Gastrocnemius medialis (tissue), 4 donors: ENCODE measurements at regions of chr1 and their contacts with region 1.

Region 1: DNA sequence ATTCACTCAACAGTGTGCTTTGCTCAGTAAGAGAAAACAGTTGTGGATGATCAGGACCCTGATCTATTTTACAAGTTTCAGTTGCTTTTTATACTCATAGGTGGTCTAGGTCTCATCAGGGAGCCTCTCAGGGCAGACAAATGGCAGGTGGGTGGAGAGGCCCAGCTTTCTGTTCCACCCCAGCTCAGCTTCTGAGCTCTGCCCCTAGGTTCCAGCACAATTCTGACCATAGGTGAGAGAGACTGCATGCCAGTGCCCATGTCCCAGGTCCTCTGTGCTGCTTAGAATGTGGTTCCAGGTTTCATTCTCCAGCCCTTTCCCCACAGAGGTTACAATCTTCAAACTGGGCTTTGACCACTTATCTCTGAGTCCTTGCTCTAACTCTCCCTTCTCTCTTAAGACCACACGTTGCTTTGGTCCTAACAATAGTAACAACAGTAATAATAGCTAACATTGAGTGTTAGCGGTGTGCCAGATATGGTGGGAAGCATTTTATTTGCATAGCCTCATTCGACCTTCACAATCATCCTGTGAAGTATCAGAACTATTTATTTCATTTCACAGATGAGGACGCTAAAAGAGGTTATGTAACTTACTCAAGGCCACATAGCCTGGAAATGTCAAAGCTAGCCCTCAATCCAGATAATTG is 19.6 kb upstream of the DUSP10 start:
- DNase-seq: no peak
- ATAC-seq: no peak
- H3K4me3 ChIP-seq: no peak overlapping the region
- H3K27ac ChIP-seq: no peak overlapping the region
- H3K4me1 ChIP-seq: peaks cover 4 to 11% of the 10 kb centered on the region in 2 donors
- H3K27me3 ChIP-seq: no peaks in the 10 kb centered on the region
- CTCF ChIP-seq: no peak
- POLR2A ChIP-seq: no peak

Region 2: DNA sequence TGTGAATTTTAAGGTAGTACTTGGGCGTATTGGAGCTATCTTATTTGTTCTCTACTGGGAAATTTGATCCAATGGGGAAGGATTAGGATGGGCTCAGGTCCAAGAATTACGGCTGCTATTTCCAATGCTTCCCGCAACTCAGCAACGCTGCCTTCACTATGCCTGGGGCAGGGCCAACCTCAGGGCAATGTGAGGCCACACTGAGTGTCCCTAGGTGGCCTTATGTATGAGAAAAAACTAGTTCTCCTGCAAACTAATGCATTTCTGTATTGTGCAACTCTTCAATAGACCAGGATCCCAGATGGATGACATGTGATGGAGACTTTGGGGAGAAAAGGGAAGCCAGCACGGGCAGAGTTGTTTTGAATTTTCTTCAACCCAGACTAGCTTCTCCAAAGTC is 187.7 kb before region 1 on chr1:
- in situ Hi-C with region 1: loop called in 1 of 4 experiments (anchors 25 kb)
- intact Hi-C with region 1: no loop called
- DNase-seq: peak; percentile 20 to 26
- ATAC-seq: peak in 1 of 2 donors; percentile 56
- H3K4me3 ChIP-seq: no peak overlapping the region
- H3K27ac ChIP-seq: no peak overlapping the region
- H3K4me1 ChIP-seq: peaks cover 10 to 14% of the 10 kb centered on the region in 2 donors
- H3K27me3 ChIP-seq: no peaks in the 10 kb centered on the region
- CTCF ChIP-seq: no peak
- POLR2A ChIP-seq: no peak

Region 3: GRCh38 chr1:221829327-221830015 is 68.0 kb after region 1 on chr1:
- in situ Hi-C with region 1: no loop called
- intact Hi-C with region 1: no loop called
- DNase-seq: no peak
- ATAC-seq: no peak
- H3K4me3 ChIP-seq: no peak overlapping the region
- H3K27ac ChIP-seq: no peak overlapping the region
- H3K4me1 ChIP-seq: peaks cover 6 to 7% of the 10 kb centered on the region in 2 donors
- H3K27me3 ChIP-seq: no peaks in the 10 kb centered on the region
- CTCF ChIP-seq: no peak
- POLR2A ChIP-seq: no peak